ENCODE measurements at regions of chr2 and their contacts with region 1.

Region 1: DNA sequence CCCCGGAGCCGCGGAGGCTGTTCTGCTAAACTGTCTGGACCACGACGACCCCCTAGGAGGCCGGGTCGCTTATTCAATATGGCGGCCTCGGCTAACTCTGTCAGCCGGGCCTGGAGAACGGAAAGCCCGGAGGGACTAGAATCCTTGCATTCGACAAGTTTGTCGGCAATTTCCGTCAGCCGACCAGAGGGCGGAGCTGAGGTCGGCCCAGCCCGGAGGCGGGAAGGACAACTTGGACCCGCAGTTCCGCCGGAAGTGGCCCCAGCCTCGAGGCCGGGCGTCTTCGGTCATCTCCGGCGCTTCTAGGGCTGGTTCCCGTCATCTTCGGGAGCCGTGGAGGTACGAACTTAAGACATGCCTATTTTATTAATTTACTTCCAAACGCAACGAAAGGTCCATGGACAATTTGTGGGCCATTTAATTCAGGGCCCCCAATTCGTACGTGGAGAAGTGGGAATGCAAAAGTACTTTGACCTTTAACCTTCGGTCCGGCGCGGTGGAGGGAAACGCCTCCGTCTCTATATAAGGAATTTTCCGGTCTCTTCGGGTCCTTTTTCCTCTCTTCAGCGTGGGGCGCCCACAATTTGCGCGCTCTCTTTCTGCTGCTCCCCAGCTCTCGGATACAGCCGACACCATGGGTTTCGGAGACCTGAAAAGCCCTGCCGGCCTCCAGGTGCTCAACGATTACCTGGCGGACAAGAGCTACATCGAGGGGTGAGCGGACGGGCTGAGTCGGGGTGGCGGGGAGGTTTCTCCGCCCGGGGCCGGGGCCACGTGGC is at the starts of genes EEF1B2 and NDUFS1:
- DNase-seq: peak; percentile 98 to 99 (median 99)
- ATAC-seq: peak; percentile 94 to 97 (median 94)
- H3K4me3 ChIP-seq: peak within 1 kb of the TSS; percentile 89 to 96 (median 93)
- H3K27ac ChIP-seq: peak within 1 kb of the TSS; percentile 88 to 95 (median 91)
- H3K4me1 ChIP-seq: peaks cover 0 to 41% (median 11%) of the 10 kb centered on the region in 4 donors
- H3K27me3 ChIP-seq: no peaks in the 10 kb centered on the region
- CTCF ChIP-seq: no peak
- POLR2A ChIP-seq: peak; percentile 78
- total RNA-seq, gene EEF1B2: 146 to 228 (median 190) TPM
- total RNA-seq, gene NDUFS1: 89.2 to 135 (median 105) TPM

Region 2: GRCh38 chr2:206085742-206086445 is 73.6 kb before region 1 on chr2 and contains the start of gene INO80D:
- intact Hi-C with region 1: loop called in 1 of 2 experiments (anchors 10 kb)
- DNase-seq: peak; percentile 76 to 85 (median 81)
- ATAC-seq: peak; percentile 82 to 92 (median 86)
- H3K4me3 ChIP-seq: peak within 1 kb of the TSS; percentile 65 to 85 (median 77)
- H3K27ac ChIP-seq: peak within 1 kb of the TSS; percentile 97 to 99 (median 97)
- H3K4me1 ChIP-seq: peaks cover 0 to 10% (median 4%) of the 10 kb centered on the region in 4 donors
- H3K27me3 ChIP-seq: no peaks in the 10 kb centered on the region
- CTCF ChIP-seq: peak; percentile 41 to 50 (median 46)
- POLR2A ChIP-seq: peak; percentile 83
- total RNA-seq, gene INO80D: 5.2 to 9.0 (median 8.2) TPM

Region 3: GRCh38 chr2:206289391-206289790 is 129.9 kb after region 1 on chr2:
- intact Hi-C with region 1: no loop called
- DNase-seq: no peak
- ATAC-seq: no peak
- H3K4me3 ChIP-seq: no peak overlapping the region
- H3K27ac ChIP-seq: no peak overlapping the region
- H3K4me1 ChIP-seq: no peaks in the 10 kb centered on the region
- H3K27me3 ChIP-seq: no peaks in the 10 kb centered on the region
- CTCF ChIP-seq: no peak
- POLR2A ChIP-seq: no peak

Measured in right lobe of liver (tissue), 6 donors.